Activated CD4-positive, alpha-beta memory T cell treated with anti-CD3 and anti-CD28 coated beads for 36 hours (primary cell): ENCODE measurements at regions of chr19 and their contacts with region 1.

Region 1: GRCh38 chr19:16495982-16496612 is at the starts of genes C19orf44 and CALR3:
- DNase-seq: peak; percentile 99
- H3K4me3 Mint-ChIP-seq: peak within 1 kb of the TSS; percentile 93
- H3K27ac Mint-ChIP-seq: peak within 1 kb of the TSS; percentile 74
- H3K4me1 Mint-ChIP-seq: peaks cover 17% of the 10 kb centered on the region
- H3K27me3 Mint-ChIP-seq: no peaks in the 10 kb centered on the region
- total RNA-seq, gene C19orf44: 2.2 to 2.6 TPM
- total RNA-seq, gene CALR3: not detected

Region 2: GRCh38 chr19:16197622-16198369 is 298.3 kb before region 1 on chr19 and contains the start of gene AP1M1:
- CTCF ChIA-PET with region 1: no interaction called
- POLR2A ChIA-PET with region 1: no interaction called
- intact Hi-C with region 1: loop called (anchors 1 kb)
- DNase-seq: peak; percentile 99
- H3K4me3 Mint-ChIP-seq: peak within 1 kb of the TSS; percentile 97
- H3K27ac Mint-ChIP-seq: peak within 1 kb of the TSS; percentile 92
- H3K4me1 Mint-ChIP-seq: peaks cover 41% of the 10 kb centered on the region
- H3K27me3 Mint-ChIP-seq: no peaks in the 10 kb centered on the region
- total RNA-seq, gene AP1M1: 100 to 113 TPM

Region 3: DNA sequence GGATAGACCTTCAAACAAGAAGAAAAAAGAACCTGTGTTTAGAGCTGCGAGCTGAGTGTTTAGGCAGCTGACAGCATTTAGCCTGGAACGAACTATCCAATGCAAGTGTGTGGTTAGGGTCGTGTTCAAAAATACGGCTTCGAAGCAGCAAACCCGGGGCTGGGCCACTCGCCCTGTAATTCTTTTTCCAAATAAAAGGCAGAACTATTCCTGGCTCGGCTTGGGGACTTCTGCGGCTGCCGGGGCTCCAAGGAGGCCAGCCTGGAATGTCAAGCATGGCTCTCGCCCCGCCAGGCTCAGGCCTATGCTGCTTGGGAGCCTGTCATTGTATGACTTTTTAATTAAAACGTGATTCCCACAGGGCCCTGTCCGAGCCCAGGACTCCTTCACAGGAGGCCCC is 223.2 kb before region 1 on chr19:
- CTCF ChIA-PET with region 1: no interaction called
- POLR2A ChIA-PET with region 1: no interaction called
- intact Hi-C with region 1: no loop called
- DNase-seq: no peak
- H3K4me3 Mint-ChIP-seq: no peak overlapping the region
- H3K27ac Mint-ChIP-seq: no peak overlapping the region
- H3K4me1 Mint-ChIP-seq: peaks cover 9% of the 10 kb centered on the region
- H3K27me3 Mint-ChIP-seq: no peaks in the 10 kb centered on the region

Region 4: DNA sequence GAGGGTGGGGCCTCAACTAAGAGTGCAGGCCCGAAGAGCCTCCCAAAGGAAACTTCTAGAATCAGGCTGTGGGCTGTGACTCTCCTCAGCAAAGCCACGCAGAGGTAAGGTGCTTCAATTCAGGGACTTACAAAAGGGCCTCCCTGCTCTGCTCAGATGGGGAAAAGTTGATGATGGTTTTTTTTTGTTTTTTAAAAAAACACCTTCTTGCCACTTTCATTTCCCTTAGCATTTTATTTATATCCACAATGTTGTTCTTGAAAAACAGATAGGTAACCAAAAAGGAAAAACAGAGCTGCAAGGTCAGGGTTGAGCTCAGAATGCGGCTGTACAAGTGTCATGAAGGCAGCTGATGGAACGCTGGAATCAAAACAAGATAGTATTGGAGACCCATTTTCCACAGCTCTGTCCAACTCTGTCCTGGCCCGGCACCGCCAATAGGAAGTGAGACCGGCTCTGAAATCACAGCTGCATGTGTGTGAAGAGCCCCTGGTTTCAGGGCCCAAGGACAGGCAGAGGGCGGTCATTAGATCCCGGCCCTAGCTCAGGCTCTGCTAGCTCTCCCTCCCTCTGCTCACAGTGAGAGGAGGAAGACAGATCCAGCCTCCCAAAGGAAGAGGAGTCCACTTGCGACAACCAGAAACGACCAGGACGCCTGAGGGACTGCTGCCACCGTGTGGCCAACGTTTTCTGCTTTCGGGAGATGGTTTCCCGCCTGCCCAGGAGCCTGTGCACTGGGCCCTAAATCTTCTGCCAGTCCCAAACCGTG is 113.1 kb before region 1 on chr19:
- CTCF ChIA-PET with region 1: no interaction called
- POLR2A ChIA-PET with region 1: no interaction called
- intact Hi-C with region 1: no loop called
- DNase-seq: peak; percentile 86
- H3K4me3 Mint-ChIP-seq: no peak overlapping the region
- H3K27ac Mint-ChIP-seq: peak overlapping the region; percentile 60
- H3K4me1 Mint-ChIP-seq: peaks cover 41% of the 10 kb centered on the region
- H3K27me3 Mint-ChIP-seq: no peaks in the 10 kb centered on the region

Region 5: DNA sequence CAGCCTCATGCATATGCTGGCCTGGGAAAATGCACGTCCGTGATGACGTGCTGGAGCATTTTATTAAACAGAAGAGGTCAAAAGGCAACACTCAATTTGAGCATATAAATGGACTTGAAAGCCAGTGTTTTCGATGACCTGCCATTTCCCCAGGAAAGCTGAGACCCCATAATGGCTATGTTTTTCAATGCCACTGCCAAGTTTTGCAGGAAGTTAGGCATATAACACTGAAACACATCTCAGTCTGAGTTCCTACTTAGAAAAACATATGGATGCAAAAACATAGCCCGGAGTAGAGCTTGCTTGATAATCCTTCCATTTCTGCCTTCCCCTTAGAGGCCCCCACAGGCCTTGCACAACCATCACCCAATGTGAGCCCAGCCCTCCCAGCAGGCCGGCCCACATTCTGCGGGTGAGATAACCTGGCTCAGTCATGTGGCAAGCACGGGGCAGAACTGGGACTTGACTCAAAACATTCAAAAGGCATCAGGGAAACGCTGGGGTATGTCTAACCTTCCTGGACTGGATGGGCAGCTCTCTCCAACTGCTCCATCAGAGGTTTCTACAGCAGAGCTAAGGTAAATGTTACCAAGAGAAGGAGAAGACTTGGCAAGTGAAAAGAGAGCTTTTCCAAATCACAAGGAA is 49.3 kb before region 1 on chr19:
- CTCF ChIA-PET with region 1: interaction called, 4 read pairs
- POLR2A ChIA-PET with region 1: no interaction called
- intact Hi-C with region 1: loop called (anchors 1 kb)
- DNase-seq: peak; percentile 66
- H3K4me3 Mint-ChIP-seq: no peak overlapping the region
- H3K27ac Mint-ChIP-seq: peak overlapping the region; percentile 81
- H3K4me1 Mint-ChIP-seq: peaks cover 55% of the 10 kb centered on the region
- H3K27me3 Mint-ChIP-seq: no peaks in the 10 kb centered on the region

Region 6: DNA sequence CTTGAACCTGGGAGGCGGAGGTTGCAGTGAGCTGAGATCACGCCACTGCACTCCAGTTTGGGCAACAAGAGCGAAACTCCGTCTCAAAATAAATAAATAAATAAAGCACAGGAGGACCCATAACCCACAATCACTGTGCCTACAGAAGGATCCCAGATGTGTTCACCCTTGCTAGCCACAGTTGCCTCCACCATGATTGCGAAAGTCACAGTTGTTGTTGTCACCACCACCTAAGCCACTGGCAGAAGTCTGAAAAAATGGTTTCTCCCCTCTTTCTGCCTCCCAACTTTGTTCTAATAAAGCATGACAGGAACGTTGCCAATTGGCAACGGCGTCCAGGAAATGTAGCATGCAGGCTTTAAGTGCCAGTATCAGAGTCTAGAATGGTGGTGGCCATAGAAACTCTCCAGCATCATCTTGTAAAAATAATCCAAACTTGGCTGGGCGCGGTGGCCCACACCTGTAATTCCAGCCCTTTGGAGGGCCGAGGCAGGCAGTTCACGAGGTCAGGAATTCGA is 22.2 kb before region 1 on chr19:
- CTCF ChIA-PET with region 1: no interaction called
- POLR2A ChIA-PET with region 1: no interaction called
- intact Hi-C with region 1: loop called (anchors 2 kb)
- DNase-seq: no peak
- H3K4me3 Mint-ChIP-seq: no peak overlapping the region
- H3K27ac Mint-ChIP-seq: no peak overlapping the region
- H3K4me1 Mint-ChIP-seq: peaks cover 19% of the 10 kb centered on the region
- H3K27me3 Mint-ChIP-seq: no peaks in the 10 kb centered on the region

Region 7: GRCh38 chr19:16542045-16542909 is 46.2 kb after region 1 on chr19 and contains the start of gene CHERP:
- CTCF ChIA-PET with region 1: no interaction called
- POLR2A ChIA-PET with region 1: no interaction called
- intact Hi-C with region 1: loop called (anchors 1 kb)
- DNase-seq: peak; percentile 96
- H3K4me3 Mint-ChIP-seq: peak within 1 kb of the TSS; percentile 84
- H3K27ac Mint-ChIP-seq: peak within 1 kb of the TSS; percentile 81
- H3K4me1 Mint-ChIP-seq: peaks cover 53% of the 10 kb centered on the region
- H3K27me3 Mint-ChIP-seq: no peaks in the 10 kb centered on the region
- total RNA-seq, gene CHERP: 50.8 TPM